ENCODE measurements at regions of chr1 and their contacts with region 1.

Region 1: DNA sequence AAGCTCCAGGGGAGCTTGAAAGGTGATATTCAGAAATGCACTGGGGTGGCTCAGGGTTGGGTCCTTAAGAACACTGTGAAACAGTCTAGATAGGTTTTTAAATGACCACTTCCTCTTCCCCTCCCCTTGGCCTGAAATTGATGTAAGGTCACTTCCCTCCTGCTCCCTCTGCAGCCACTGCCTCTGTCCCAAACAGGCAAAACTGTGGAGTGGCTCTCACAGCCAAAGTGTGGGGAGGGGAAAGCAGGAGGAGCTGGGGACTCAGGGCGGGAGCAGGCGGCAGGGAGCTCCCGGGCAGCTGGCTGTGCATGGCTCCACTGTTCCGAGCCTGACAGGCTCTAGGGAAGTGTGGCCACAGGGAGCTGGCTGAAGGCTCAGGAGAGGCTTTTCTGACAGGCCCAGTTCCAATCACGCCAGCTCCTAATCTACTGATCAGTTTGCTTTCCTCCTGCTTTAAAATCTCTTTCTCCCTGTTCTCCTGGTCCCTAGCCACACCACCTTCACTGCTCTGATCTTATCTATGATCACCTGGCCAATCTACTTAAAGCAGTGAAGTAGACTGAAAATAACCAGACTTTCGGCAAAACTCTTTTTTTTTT is 5.1 kb upstream of the CSRP1 start:
- DNase-seq: peak; percentile 69
- ATAC-seq: peak; percentile 81
- H3K4me3 Mint-ChIP-seq: 0 out of 2 replicates have a peak overlapping the region, but pooled peaks have one; percentile 29
- H3K27ac Mint-ChIP-seq: peak overlapping the region; percentile 78; the same call in 1 of the 2 replicates
- H3K4me1 Mint-ChIP-seq: peaks cover 25% of the 10 kb centered on the region
- H3K27me3 Mint-ChIP-seq: peaks cover 25% of the 10 kb centered on the region
- CTCF ChIP-seq: no peak

Region 2: GRCh38 chr1:201447911-201448871 is 63.8 kb before region 1 on chr1:
- CTCF ChIA-PET with region 1: interaction called, 64 read pairs
- POLR2A ChIA-PET with region 1: no interaction called
- DNase-seq: peak; percentile 83
- ATAC-seq: peak; percentile 89
- H3K4me3 Mint-ChIP-seq: no peak overlapping the region
- H3K27ac Mint-ChIP-seq: no peak overlapping the region
- H3K4me1 Mint-ChIP-seq: peaks cover 35% of the 10 kb centered on the region
- H3K27me3 Mint-ChIP-seq: peaks cover 3% of the 10 kb centered on the region; the same call in 1 of the 2 replicates
- CTCF ChIP-seq: peak; percentile 80

Region 3: GRCh38 chr1:201488817-201489589 is 23.0 kb before region 1 on chr1:
- CTCF ChIA-PET with region 1: interaction called, 390 read pairs
- POLR2A ChIA-PET with region 1: interaction called, 3 read pairs
- DNase-seq: no peak
- ATAC-seq: no peak
- H3K4me3 Mint-ChIP-seq: no peak overlapping the region
- H3K27ac Mint-ChIP-seq: no peak overlapping the region
- H3K4me1 Mint-ChIP-seq: peaks cover 9% of the 10 kb centered on the region
- H3K27me3 Mint-ChIP-seq: no peaks in the 10 kb centered on the region
- CTCF ChIP-seq: no peak

Region 4: GRCh38 chr1:201538612-201539551 is 26.8 kb after region 1 on chr1 and contains the start of gene NAV1:
- CTCF ChIA-PET with region 1: interaction called, 43 read pairs
- POLR2A ChIA-PET with region 1: no interaction called
- DNase-seq: peak; percentile 65
- ATAC-seq: peak; percentile 63
- H3K4me3 Mint-ChIP-seq: peak within 1 kb of the TSS; percentile 88
- H3K27ac Mint-ChIP-seq: no peak within 1 kb of the TSS
- H3K4me1 Mint-ChIP-seq: peaks cover 32% of the 10 kb centered on the region
- H3K27me3 Mint-ChIP-seq: peaks cover 64% of the 10 kb centered on the region
- CTCF ChIP-seq: no peak
- total RNA-seq, gene NAV1: 41.0 to 51.0 TPM (median 46.2 TPM) in 3 replicates

Region 5: DNA sequence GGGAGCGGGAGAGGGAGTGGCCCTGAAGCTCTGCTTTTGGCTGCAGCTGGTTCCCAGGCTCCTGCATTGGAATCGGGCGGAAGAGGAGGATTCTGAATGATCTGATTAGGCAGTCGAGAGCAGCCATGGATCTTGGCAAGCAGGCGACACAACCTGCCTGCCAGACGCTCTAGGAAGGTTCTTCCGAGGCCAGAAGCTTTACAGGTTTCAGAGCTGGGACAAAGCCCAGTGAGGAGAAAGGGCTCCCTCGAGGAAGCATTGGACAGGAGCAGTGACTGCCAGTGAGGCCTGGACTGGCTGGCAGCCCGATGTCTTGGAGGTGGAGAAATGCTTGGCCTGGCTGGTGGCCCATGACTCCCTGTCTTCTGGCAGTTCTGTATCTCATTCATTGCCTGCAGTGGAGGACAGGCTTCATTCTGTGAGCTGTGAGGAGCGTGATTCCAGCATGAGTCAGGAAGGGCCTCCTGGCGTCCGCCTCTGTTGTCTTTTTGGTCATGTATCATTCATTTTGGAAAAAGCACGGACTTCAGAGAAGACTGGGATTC is 184.2 kb after region 1 on chr1:
- CTCF ChIA-PET with region 1: interaction called, 14 read pairs
- POLR2A ChIA-PET with region 1: no interaction called
- DNase-seq: no peak
- ATAC-seq: no peak
- H3K4me3 Mint-ChIP-seq: no peak overlapping the region
- H3K27ac Mint-ChIP-seq: peak overlapping the region; percentile 34; the same call in 1 of the 2 replicates
- H3K4me1 Mint-ChIP-seq: peaks cover 9% of the 10 kb centered on the region
- H3K27me3 Mint-ChIP-seq: no peaks in the 10 kb centered on the region; the same call in 1 of the 2 replicates
- CTCF ChIP-seq: no peak

Region 6: GRCh38 chr1:201828820-201829774 is 317.1 kb after region 1 on chr1 and contains the start of gene IPO9:
- CTCF ChIA-PET with region 1: interaction called, 16 read pairs
- POLR2A ChIA-PET with region 1: no interaction called
- DNase-seq: peak; percentile 97
- ATAC-seq: peak; percentile 90
- H3K4me3 Mint-ChIP-seq: peak within 1 kb of the TSS; percentile 98
- H3K27ac Mint-ChIP-seq: peak within 1 kb of the TSS; percentile 93
- H3K4me1 Mint-ChIP-seq: peaks cover 50% of the 10 kb centered on the region
- H3K27me3 Mint-ChIP-seq: no peaks in the 10 kb centered on the region
- CTCF ChIP-seq: peak; percentile 92
- total RNA-seq, gene IPO9: 94.1 to 98.6 TPM (median 97.2 TPM) in 3 replicates

Region 7: GRCh38 chr1:201851949-201852348 is 339.9 kb after region 1 on chr1:
- CTCF ChIA-PET with region 1: no interaction called
- POLR2A ChIA-PET with region 1: no interaction called
- DNase-seq: no peak
- ATAC-seq: no peak
- H3K4me3 Mint-ChIP-seq: no peak overlapping the region
- H3K27ac Mint-ChIP-seq: no peak overlapping the region
- H3K4me1 Mint-ChIP-seq: no peaks in the 10 kb centered on the region
- H3K27me3 Mint-ChIP-seq: no peaks in the 10 kb centered on the region
- CTCF ChIP-seq: no peak

Measured in WTC11 (cell line).